ENCODE measurements at regions of chr19 and their contacts with region 1.

Region 1: GRCh38 chr19:46990991-46991676 is 28.5 kb upstream of the NPAS1 start:
- DNase-seq: peak; percentile 69 to 87 (median 78)
- ATAC-seq: peak; percentile 75 to 86 (median 82)
- H3K4me3 ChIP-seq: no peak overlapping the region
- H3K27ac ChIP-seq: peak overlapping the region in 1 of 4 donors; percentile 29
- H3K4me1 ChIP-seq: peaks cover 0 to 8% (median 6%) of the 10 kb centered on the region in 3 donors
- H3K27me3 ChIP-seq: no peaks in the 10 kb centered on the region
- CTCF ChIP-seq: peak; percentile 69 to 79 (median 74)

Region 2: GRCh38 chr19:46753420-46754155 is 237.5 kb before region 1 on chr19:
- intact Hi-C with region 1: loop called in 1 of 3 experiments (anchors 10 kb)
- DNase-seq: peak; percentile 54 to 79 (median 72)
- ATAC-seq: peak; percentile 36 to 76 (median 74)
- H3K4me3 ChIP-seq: no peak overlapping the region
- H3K27ac ChIP-seq: no peak overlapping the region
- H3K4me1 ChIP-seq: no peaks in the 10 kb centered on the region
- H3K27me3 ChIP-seq: no peaks in the 10 kb centered on the region
- CTCF ChIP-seq: peak in 1 of 4 donors; percentile 20

Region 3: GRCh38 chr19:46791955-46792378 is 199.2 kb before region 1 on chr19:
- intact Hi-C with region 1: no loop called
- DNase-seq: no peak
- ATAC-seq: no peak
- H3K4me3 ChIP-seq: no peak overlapping the region
- H3K27ac ChIP-seq: no peak overlapping the region
- H3K4me1 ChIP-seq: peaks cover 0 to 4% (median 0%) of the 10 kb centered on the region in 3 donors
- H3K27me3 ChIP-seq: no peaks in the 10 kb centered on the region
- CTCF ChIP-seq: no peak

Region 4: DNA sequence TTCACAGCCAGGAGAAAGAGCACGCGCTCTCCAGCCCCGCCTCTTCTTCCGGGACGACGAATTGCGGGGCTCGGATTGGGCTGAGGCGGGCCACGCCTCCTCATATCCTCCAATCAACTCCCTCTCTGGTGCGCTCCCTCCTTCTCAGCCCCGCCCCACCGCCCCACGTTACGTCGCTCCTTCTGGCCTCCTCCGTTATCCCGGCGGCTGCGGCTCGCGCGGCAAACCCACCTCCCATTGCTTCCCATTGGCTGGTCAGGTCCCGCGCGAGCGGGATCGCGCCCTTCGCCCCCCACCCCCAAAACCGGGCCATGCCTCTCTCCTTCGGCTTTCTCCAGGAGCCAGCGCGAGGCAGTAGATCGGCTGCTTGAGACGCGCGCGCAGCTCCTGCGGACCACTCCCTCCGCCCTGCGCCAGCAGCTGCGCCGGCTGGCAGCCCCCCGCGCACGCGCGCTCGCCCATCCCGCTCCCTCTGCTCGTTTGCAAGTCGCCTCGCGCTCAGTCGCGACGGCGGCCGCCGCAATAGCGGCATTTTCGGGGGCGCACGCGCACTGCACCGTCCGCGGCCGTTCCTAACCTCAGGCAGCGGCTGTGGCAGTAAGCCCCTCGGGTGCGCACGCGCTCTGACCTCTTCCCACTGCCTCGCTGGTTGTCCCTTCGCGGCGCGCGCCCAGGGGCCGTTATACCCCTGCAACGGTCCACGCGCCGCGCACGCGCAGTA is 130.8 kb before region 1 on chr19:
- intact Hi-C with region 1: loop called in 2 of 3 experiments (anchors 5 kb)
- DNase-seq: peak; percentile 95 to 99 (median 98)
- ATAC-seq: peak; percentile 84 to 91 (median 87)
- H3K4me3 ChIP-seq: peak overlapping the region; percentile 79 to 95 (median 88)
- H3K27ac ChIP-seq: peak overlapping the region; percentile 94 to 99 (median 97)
- H3K4me1 ChIP-seq: peaks cover 13 to 38% (median 24%) of the 10 kb centered on the region in 3 donors
- H3K27me3 ChIP-seq: no peaks in the 10 kb centered on the region
- CTCF ChIP-seq: no peak

Region 5: GRCh38 chr19:46878613-46879375 is 112.3 kb before region 1 on chr19:
- intact Hi-C with region 1: no loop called
- DNase-seq: no peak
- ATAC-seq: no peak
- H3K4me3 ChIP-seq: no peak overlapping the region
- H3K27ac ChIP-seq: no peak overlapping the region
- H3K4me1 ChIP-seq: no peaks in the 10 kb centered on the region
- H3K27me3 ChIP-seq: no peaks in the 10 kb centered on the region
- CTCF ChIP-seq: no peak

Measured in pancreas (tissue), 10 donors.